HCT116 (cell line): ENCODE measurements at regions of chr2 and their contacts with region 1.

Region 1: DNA sequence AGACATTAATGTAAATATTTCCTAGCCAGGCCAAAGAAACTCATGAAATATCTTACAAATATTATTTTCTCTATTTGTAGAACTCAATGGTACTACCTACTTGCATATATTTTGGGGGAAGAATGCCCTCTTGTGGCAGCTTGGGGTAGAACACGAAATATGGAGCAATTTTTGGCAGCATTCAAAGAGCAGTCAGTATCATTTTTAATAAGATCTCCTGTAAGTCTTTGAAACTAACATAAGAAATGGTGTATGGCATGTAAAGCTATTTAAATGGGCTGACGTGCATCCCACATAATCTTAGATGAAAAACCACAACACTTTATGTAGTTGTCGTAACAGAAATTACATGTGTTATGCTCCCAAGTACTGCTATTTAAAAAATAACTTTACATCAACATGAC is 62.3 kb upstream of the CCDC195 start:
- DNase-seq: peak; percentile 46
- ATAC-seq: peak; percentile 67
- H3K4me3 ChIP-seq: no peak overlapping the region
- H3K27ac ChIP-seq: no peak overlapping the region
- H3K4me1 ChIP-seq: peaks cover 0 to 11% of the 10 kb centered on the region in 2 experiments; a peak in 1 of 4 replicates
- H3K27me3 ChIP-seq: no peaks in the 10 kb centered on the region
- CTCF ChIP-seq: peak; percentile 65 to 82 (median 79); a peak in 5 of 6 replicates
- POLR2A ChIP-seq: no peak
- RAD21 ChIP-seq: peak; percentile 87

Region 2: GRCh38 chr2:224357098-224357901 is 421.2 kb before region 1 on chr2:
- CTCF ChIA-PET with region 1: interaction called, 5 read pairs
- POLR2A ChIA-PET with region 1: no interaction called
- RAD21 ChIA-PET with region 1: interaction called in 1 of 2 experiments, 3 read pairs
- intact Hi-C with region 1: loop called (anchors 1 kb)
- DNase-seq: peak; percentile 44
- ATAC-seq: peak; percentile 83
- H3K4me3 ChIP-seq: no peak overlapping the region
- H3K27ac ChIP-seq: no peak overlapping the region
- H3K4me1 ChIP-seq: 0 out of 4 replicates have a peak, but pooled peaks cover 0 to 4% of the 10 kb centered on the region in 2 experiments
- H3K27me3 ChIP-seq: no peaks in the 10 kb centered on the region
- CTCF ChIP-seq: peak; percentile 62 to 91 (median 85); a peak in 5 of 6 replicates
- POLR2A ChIP-seq: no peak
- RAD21 ChIP-seq: peak; percentile 92

Region 3: DNA sequence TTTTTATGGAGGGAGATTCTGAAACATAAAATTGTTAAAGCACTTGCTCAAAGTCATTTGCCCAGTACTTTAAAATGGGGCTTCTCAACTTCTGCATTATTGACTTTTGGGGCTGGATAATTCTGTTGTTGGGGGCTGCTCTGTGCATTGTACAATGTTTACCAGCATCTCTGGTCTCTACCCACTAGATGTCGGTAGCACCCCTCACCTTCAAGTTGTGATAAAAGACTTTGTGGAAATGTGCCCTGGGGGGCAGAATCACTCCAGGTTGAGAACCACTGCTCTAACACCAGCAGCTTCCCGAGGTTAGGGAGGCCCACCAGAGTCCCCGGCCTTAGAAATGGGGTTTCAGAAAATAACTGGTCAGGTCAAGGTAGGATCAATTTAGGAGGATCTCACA is 166.5 kb before region 1 on chr2:
- CTCF ChIA-PET with region 1: no interaction called
- POLR2A ChIA-PET with region 1: no interaction called
- RAD21 ChIA-PET with region 1: no interaction called
- intact Hi-C with region 1: loop called (anchors 1 kb)
- DNase-seq: no peak
- ATAC-seq: peak; percentile 85
- H3K4me3 ChIP-seq: no peak overlapping the region
- H3K27ac ChIP-seq: no peak overlapping the region
- H3K4me1 ChIP-seq: no peaks in the 10 kb centered on the region
- H3K27me3 ChIP-seq: no peaks in the 10 kb centered on the region
- CTCF ChIP-seq: peak; percentile 44 to 76 (median 46)
- POLR2A ChIP-seq: no peak
- RAD21 ChIP-seq: peak; percentile 62

Region 4: GRCh38 chr2:224650815-224651439 is 127.5 kb before region 1 on chr2:
- CTCF ChIA-PET with region 1: interaction called, 7 read pairs
- POLR2A ChIA-PET with region 1: no interaction called
- RAD21 ChIA-PET with region 1: no interaction called
- intact Hi-C with region 1: loop called (anchors 5 kb)
- DNase-seq: peak; percentile 53
- ATAC-seq: peak; percentile 87
- H3K4me3 ChIP-seq: no peak overlapping the region
- H3K27ac ChIP-seq: no peak overlapping the region
- H3K4me1 ChIP-seq: peaks cover 0 to 2% of the 10 kb centered on the region in 2 experiments; a peak in 1 of 4 replicates
- H3K27me3 ChIP-seq: no peaks in the 10 kb centered on the region
- CTCF ChIP-seq: peak; percentile 72 to 90 (median 77); a peak in 5 of 6 replicates
- POLR2A ChIP-seq: no peak
- RAD21 ChIP-seq: peak; percentile 88